ENCODE measurements at regions of chr12 and their contacts with region 1.

Region 1: DNA sequence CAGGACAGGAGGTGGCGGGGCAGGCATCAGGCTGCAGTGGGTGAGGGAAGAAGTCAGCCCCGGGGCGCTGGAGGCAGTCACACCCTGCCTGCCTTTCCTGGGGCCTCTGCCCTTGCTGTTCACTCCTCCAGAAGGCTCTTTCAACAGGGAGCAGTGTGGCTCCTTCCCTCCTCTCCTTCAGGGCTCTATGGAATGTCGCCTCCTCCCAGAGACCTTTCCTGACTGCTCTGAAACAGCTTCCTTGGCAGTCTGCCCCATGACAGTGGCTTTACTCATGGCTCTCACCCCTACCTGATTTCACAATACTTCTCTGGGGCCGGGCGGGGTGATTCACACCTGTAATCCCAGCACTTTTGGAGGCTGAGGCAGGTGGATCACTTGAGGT is 7.1 kb downstream of the RHOF start:
- DNase-seq: peak; percentile 76 to 97
- ATAC-seq: peak; percentile 78 to 80
- H3K4me3 ChIP-seq: no peak overlapping the region
- H3K27ac ChIP-seq: peak overlapping the region; percentile 72 to 100
- H3K4me1 ChIP-seq: peaks cover 97% of the 10 kb centered on the region
- CTCF ChIP-seq: 0 out of 3 replicates have a peak, but pooled peaks have one; percentile 5
- EP300 ChIP-seq: peak in 1 of 2 experiments; percentile 49; a peak in 2 of 5 replicates
- POLR2A ChIP-seq: no peak
- RAD21 ChIP-seq: peak; percentile 21 to 22; a peak in 1 of 5 replicates

Region 2: DNA sequence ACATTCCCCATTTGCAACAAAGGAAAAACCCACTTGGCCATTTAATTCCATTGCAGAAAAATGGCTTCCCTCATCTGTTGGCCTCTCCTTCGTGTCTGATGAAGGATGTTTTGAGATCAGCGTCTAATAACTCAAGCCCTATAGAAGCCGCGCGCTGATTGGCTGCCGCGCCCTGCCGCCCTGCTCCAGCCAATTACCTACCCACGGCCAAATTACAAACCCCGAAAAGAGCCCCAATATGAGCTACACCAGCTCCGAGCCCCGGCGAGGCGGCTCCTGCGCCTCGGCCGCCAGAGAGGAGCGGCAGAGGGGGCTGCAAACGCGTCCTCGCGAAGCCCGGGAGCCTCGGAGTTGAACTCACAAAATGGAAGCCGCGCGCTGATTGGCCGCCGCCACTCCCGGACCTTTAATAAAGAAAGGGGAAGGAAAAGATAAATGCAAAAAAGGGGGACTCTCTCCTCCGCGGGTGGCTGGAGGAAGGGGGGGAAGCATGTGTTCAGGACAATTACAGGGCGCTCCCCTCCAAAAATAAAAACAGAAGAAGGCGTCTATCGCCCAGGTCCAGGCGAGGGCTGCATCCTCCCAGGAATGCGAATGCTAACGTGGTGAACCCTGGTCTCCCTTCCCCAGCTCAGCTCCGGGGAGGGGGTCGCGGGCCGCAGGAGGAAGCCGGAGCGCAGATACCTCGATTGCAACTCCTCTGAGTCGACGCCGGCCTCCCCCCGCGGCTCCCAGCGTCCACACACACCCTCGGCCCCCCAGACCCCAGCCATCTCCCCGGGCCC is 16.6 kb after region 1 on chr12:
- CTCF ChIA-PET with region 1: interaction called, 2,657 read pairs
- POLR2A ChIA-PET with region 1: interaction called, 12 read pairs
- DNase-seq: peak; percentile 87 to 96
- ATAC-seq: peak; percentile 37 to 65
- H3K4me3 ChIP-seq: peak overlapping the region; percentile 60
- H3K27ac ChIP-seq: peak overlapping the region; percentile 100
- H3K4me1 ChIP-seq: peaks cover 52% of the 10 kb centered on the region
- CTCF ChIP-seq: no peak
- EP300 ChIP-seq: no peak
- POLR2A ChIP-seq: peak; percentile 53
- RAD21 ChIP-seq: no peak

Measured in A549 (cell line).